ENCODE measurements at regions of chr7 and their contacts with region 1.

Region 1: DNA sequence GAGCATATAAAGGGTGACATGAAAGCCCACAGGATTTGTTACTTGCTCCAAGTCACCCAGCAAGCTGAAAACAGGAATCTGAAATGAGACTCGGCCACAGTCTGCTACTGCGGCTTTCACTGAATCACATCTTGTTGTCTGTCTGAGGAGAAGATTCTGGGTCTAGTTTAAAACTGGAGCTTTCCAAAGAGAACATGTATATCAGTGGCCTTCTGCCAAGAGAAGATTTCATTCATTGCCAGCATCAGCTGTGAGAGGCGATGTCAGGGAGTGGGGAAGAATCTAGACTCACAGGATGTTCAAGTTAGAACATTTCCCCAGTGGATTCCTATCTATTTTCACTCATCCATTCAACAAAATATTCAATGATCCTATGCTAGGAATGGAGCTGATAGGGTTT is 122.8 kb downstream of the GALNT17 start:
- DNase-seq: no peak
- ATAC-seq: no peak

Region 2: DNA sequence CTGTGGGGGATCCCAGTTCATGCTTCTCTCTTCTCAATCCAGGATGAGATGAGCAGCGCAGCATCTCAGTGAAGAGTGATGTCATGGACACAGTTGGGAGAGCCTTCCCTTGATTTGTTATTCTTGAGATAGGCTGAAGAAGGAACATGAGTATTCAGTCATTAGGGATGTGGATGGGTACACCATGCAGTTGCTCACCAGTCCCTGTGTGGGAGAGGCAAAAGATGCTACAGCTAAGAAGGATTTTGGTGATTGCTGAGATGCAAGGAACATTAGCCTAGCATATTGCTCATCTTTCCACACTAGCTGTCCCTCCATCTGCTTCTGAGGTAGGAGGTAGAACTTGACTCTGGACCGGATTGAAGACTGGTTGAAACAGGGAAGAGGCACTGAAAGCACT is 56.8 kb after region 1 on chr7:
- intact Hi-C with region 1: loop called (anchors 10 kb)
- DNase-seq: no peak
- ATAC-seq: no peak

Region 3: GRCh38 chr7:71414490-71414889 is 159.7 kb after region 1 on chr7:
- intact Hi-C with region 1: no loop called
- DNase-seq: peak; percentile 81
- ATAC-seq: peak; percentile 83